ENCODE measurements at regions of chr3 and their contacts with region 1.

Region 1: GRCh38 chr3:52278510-52279069 is at the start of gene WDR82:
- DNase-seq: peak; percentile 100
- ATAC-seq: peak; percentile 85
- H3K4me3 Mint-ChIP-seq: peak within 1 kb of the TSS; percentile 99
- H3K27ac Mint-ChIP-seq: peak within 1 kb of the TSS; percentile 98
- H3K4me1 Mint-ChIP-seq: peaks cover 55% of the 10 kb centered on the region
- H3K27me3 Mint-ChIP-seq: no peaks in the 10 kb centered on the region
- CTCF ChIP-seq: no peak
- total RNA-seq, gene WDR82: 84.1 and 86.4 TPM in 2 replicates

Region 2: DNA sequence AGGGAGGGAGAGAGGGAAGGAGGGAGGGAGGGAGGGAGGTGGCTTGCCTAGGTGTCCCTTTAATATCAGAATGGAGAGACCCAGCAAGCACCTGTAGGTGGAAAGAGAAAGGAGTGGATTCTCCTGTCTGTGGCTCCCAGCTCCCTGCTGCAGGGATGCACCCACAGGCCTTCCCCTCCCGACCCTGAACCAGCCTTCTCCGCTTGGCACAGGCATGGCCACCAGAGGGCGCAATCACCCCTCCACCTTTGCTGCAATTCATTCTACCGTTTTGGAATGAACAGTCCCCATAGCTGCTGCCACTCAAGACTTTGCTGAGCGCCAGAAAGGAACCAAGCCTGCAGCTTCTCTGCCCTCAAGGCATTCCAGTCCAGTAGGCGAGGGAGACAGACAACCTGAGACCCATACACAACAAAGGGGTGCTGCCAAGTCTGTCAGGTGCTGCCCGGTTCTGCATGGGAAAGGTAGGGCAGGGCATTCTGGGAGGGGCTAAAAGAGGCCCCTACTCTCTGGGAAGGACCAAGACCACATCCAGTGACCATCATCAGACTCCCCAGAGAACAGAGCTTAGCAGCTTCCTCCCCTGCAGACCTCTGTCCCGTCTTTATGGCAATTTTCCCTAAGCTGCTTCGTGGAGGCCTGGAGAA is 58.1 kb before region 1 on chr3:
- CTCF ChIA-PET with region 1: interaction called, 48 read pairs
- POLR2A ChIA-PET with region 1: interaction called, 81 read pairs
- intact Hi-C with region 1: loop called (anchors 1 kb)
- DNase-seq: peak; percentile 80
- ATAC-seq: peak; percentile 59
- H3K4me3 Mint-ChIP-seq: peak overlapping the region; percentile 50
- H3K27ac Mint-ChIP-seq: peak overlapping the region; percentile 53
- H3K4me1 Mint-ChIP-seq: peaks cover 88% of the 10 kb centered on the region
- H3K27me3 Mint-ChIP-seq: no peaks in the 10 kb centered on the region
- CTCF ChIP-seq: no peak

Region 3: GRCh38 chr3:52231502-52232293 is 46.9 kb before region 1 on chr3:
- CTCF ChIA-PET with region 1: interaction called, 29 read pairs
- POLR2A ChIA-PET with region 1: interaction called, 111 read pairs
- intact Hi-C with region 1: loop called (anchors 1 kb)
- DNase-seq: peak; percentile 89
- ATAC-seq: peak; percentile 90
- H3K4me3 Mint-ChIP-seq: no peak overlapping the region
- H3K27ac Mint-ChIP-seq: no peak overlapping the region
- H3K4me1 Mint-ChIP-seq: peaks cover 50% of the 10 kb centered on the region
- H3K27me3 Mint-ChIP-seq: no peaks in the 10 kb centered on the region
- CTCF ChIP-seq: peak; percentile 41

Region 4: DNA sequence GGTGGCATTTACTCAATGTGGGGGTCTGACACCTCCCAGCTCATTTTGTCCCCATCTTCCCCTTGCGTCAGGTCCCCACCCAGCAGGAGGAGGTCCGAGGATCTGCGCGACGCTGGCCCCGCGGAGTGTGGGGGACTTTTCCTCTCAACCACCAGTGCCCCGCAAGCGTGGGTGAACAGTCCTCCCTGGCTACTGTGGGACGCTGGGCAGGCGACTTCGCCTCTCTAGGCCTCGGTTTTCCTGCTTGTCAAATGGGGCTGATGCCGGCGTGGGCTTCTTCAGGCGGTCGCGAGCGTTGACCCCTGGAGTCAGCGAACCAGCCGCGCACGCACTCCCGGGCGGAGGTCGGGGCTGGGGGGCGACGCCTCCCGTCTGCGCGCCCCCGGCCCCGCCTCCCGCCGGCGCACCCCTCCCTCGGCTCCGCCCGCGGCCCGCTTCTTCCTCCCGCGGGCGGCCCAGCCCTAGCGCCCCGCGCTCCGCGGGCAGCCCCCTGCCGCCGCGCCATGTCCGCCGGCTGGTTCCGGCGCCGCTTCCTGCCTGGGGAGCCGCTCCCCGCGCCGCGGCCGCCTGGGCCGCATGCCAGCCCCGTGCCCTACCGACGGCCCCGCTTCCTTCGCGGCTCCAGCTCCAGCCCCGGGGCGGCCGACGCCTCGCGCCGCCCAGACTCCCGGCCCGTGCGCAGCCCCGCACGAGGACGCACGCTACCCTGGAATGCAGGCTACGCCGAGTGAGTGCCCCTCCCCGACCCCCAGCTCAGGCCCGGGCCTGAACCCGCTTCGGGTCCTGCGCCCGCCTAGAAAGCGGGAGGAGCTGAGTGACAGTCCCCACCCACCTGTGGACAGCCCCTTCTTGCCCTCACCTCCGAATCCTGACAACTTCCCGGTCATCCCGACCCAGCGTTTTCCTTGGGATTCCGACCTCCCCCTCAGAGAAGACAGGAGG is 33.0 kb before region 1 on chr3 and contains the start of gene PPM1M:
- CTCF ChIA-PET with region 1: interaction called, 10 read pairs
- POLR2A ChIA-PET with region 1: interaction called, 111 read pairs
- intact Hi-C with region 1: no loop called
- DNase-seq: peak; percentile 61
- ATAC-seq: peak; percentile 44
- H3K4me3 Mint-ChIP-seq: peak within 1 kb of the TSS; percentile 84
- H3K27ac Mint-ChIP-seq: peak within 1 kb of the TSS; percentile 95
- H3K4me1 Mint-ChIP-seq: peaks cover 61% of the 10 kb centered on the region
- H3K27me3 Mint-ChIP-seq: no peaks in the 10 kb centered on the region
- CTCF ChIP-seq: no peak
- total RNA-seq, gene PPM1M: 44.4 and 44.6 TPM in 2 replicates

Region 5: DNA sequence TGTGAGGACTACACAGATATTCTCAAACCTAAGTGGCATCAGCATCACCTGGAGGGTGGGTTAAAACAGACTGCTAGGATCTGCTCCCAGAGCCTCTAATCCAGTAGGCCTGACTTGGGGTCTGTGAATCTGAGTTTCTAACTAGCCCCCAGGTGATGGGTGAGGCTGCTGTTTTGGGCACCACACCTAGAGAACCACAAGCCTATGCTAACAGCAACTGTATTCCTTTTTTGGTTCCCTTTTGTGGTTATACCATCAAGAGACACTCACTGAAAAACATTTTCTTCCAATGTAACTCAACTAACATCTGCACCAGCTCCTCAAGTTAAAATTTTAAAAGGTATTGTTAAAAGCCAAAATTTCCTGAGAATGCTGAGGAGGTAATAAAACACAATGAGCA is 16.1 kb before region 1 on chr3:
- CTCF ChIA-PET with region 1: interaction called, 3 read pairs
- POLR2A ChIA-PET with region 1: interaction called, 16 read pairs
- intact Hi-C with region 1: loop called (anchors 2 kb)
- DNase-seq: no peak
- ATAC-seq: peak; percentile 42
- H3K4me3 Mint-ChIP-seq: no peak overlapping the region
- H3K27ac Mint-ChIP-seq: peak overlapping the region; percentile 50
- H3K4me1 Mint-ChIP-seq: peaks cover 43% of the 10 kb centered on the region
- H3K27me3 Mint-ChIP-seq: no peaks in the 10 kb centered on the region
- CTCF ChIP-seq: no peak

Region 6: DNA sequence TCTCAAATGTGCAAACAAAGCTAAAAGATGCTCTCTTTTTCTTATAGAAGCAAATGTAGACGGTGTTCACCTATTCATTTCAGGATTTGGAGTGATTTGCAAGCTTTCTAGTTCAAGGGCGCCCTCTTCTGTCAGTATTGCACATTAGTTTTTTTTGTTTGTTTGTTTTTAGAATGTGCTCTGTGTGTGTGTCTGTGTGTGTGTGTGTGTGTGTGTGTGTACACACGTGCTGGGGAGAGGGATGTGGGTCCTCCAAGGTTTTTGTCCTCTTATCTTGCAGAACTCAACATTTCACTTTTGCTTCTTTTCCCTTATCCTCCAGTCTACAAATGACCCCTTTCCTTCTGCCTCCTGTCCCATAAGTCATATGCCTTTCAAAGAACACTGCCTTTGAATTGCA is 61.0 kb after region 1 on chr3:
- CTCF ChIA-PET with region 1: interaction called, 25 read pairs
- POLR2A ChIA-PET with region 1: interaction called, 4 read pairs
- intact Hi-C with region 1: no loop called
- DNase-seq: no peak
- ATAC-seq: peak; percentile 40
- H3K4me3 Mint-ChIP-seq: no peak overlapping the region
- H3K27ac Mint-ChIP-seq: no peak overlapping the region
- H3K4me1 Mint-ChIP-seq: no peaks in the 10 kb centered on the region
- H3K27me3 Mint-ChIP-seq: no peaks in the 10 kb centered on the region
- CTCF ChIP-seq: peak; percentile 48